GM10248 (cell line): ENCODE measurements at regions of chr1 and their contacts with region 1.

Region 1: DNA sequence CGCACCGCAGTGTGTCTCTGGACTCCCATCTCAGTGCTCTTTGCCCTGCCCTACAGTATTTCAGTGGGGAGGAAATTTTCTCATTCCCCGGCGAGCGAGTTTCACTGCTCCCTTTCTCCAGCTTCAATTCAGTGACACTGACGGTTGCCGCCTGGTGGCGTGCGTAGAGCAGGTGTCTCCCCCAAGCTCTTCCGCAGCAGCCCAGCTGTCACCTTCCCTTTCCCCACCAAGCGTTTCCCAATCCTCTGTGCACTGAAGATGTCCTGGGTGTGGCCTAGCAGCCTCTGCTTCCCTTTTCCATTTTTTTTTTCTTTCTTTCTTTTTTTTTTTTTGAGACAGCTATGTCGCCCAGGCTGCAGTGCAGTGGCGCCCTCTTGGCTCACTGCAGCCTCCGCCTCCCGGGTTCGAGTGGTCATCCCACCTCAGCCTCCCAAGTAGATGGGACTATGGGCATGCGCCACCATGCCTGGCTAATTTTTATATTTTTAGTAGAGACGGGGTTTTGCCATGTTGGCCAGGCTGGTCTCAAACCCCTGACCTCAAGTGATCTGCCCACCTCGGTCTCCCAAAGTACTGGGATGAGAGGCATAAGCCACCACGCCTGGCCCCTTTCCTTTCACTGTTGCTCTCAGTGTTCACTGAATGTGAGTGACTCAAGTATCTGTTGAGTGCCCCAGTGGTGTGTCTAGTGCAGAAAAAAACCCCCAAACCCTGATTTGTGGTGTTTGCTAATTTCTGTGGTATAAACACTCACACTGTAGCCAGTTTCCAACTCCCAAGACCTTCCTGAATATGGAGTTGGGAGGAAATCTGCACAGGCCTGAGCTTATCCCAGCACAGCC is 30.1 kb downstream of the TNFRSF1B start:
- DNase-seq: no peak
- CTCF ChIP-seq: peak; percentile 10

Region 2: DNA sequence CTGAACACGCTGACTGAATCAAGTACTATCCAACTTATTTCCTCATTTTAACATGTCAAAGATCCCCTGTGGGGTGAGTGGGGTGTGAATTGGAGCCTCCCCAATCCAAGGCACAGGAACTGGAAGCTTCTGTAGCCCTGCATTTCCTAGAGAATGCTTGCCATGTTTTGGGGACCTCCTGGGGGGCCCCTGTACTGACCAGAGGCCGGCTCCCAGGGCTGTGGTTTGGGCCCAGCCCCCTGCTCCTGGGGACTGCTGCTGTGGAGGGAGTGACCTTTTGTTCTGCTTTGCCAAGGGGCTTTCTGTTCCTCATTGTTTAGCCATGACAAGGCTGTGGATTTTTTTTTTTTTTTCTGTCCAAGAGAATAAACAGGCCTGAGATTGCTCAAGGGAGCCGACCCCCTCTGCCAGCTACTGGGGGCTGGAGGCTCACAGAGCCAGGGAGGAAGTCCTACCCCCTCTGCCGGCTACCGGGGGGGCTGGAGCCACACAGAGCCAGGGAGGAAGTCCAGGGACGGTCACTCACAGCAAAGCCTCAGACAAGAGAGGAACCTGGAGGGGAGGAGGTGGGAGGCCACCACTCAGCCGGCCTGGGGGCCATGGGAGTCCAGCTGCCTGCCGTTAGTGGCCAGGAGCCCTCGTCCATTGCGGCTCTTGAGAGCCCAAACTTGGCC is 12.7 kb before region 1 on chr1:
- CTCF ChIA-PET with region 1: interaction called, 11 read pairs
- POLR2A ChIA-PET with region 1: no interaction called
- DNase-seq: peak; percentile 50
- CTCF ChIP-seq: no peak

Region 3: GRCh38 chr1:12208764-12209494 is 12.1 kb after region 1 on chr1:
- CTCF ChIA-PET with region 1: interaction called, 14 read pairs
- POLR2A ChIA-PET with region 1: no interaction called
- DNase-seq: peak; percentile 85
- CTCF ChIP-seq: peak; percentile 88